CD8-positive, alpha-beta memory T cell (primary cell): ENCODE measurements at regions of chr1 and their contacts with region 1.

Region 1: DNA sequence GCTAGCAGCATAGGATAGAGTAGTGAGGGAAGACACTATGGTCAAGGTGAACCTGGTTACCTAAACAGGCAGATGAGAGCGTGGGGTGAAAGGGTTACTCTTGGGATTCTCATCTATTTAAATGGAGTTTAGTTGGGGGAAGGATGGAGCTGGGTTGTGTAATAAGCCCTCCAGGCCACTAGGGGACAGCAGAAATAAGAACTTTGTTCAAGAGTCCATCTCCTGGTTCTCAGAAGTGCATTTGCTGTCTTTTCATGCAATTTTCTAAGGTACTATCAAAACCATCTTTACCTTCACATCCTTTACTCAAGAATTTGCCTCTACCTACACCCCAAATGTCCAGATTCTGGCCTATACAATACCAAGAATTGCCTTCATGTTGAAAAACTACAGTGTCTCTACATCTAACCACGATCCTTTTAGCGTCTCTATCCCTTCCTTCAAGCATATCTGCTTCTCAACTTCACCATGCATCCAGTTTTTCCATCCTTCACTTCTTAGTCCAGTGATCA is 28.0 kb downstream of the SLAMF1 start:
- DNase-seq: peak in 4 of 5 donors; percentile 21 to 63 (median 44)
- H3K4me3 ChIP-seq: no peak overlapping the region
- H3K4me3 Mint-ChIP-seq: peak overlapping the region in 1 of 7 donors; percentile 1
- H3K27ac ChIP-seq: no peak overlapping the region
- H3K27ac Mint-ChIP-seq: peak overlapping the region; percentile 3 to 91 (median 63)
- H3K4me1 ChIP-seq: peaks cover 37% of the 10 kb centered on the region
- H3K4me1 Mint-ChIP-seq: peaks cover 62 to 86% (median 75%) of the 10 kb centered on the region in 3 donors
- H3K27me3 ChIP-seq: no peaks in the 10 kb centered on the region
- H3K27me3 Mint-ChIP-seq: no peaks in the 10 kb centered on the region

Region 2: GRCh38 chr1:160186246-160186645 is 432.6 kb before region 1 on chr1:
- CTCF ChIA-PET with region 1: no interaction called
- POLR2A ChIA-PET with region 1: no interaction called
- DNase-seq: no peak
- H3K4me3 ChIP-seq: no peak overlapping the region
- H3K4me3 Mint-ChIP-seq: no peak overlapping the region
- H3K27ac ChIP-seq: no peak overlapping the region
- H3K27ac Mint-ChIP-seq: peak overlapping the region in 1 of 8 donors; percentile 19
- H3K4me1 ChIP-seq: no peaks in the 10 kb centered on the region
- H3K4me1 Mint-ChIP-seq: no peaks in the 10 kb centered on the region
- H3K27me3 ChIP-seq: no peaks in the 10 kb centered on the region
- H3K27me3 Mint-ChIP-seq: peaks cover 9 to 26% of the 10 kb centered on the region in 2 donors

Region 3: DNA sequence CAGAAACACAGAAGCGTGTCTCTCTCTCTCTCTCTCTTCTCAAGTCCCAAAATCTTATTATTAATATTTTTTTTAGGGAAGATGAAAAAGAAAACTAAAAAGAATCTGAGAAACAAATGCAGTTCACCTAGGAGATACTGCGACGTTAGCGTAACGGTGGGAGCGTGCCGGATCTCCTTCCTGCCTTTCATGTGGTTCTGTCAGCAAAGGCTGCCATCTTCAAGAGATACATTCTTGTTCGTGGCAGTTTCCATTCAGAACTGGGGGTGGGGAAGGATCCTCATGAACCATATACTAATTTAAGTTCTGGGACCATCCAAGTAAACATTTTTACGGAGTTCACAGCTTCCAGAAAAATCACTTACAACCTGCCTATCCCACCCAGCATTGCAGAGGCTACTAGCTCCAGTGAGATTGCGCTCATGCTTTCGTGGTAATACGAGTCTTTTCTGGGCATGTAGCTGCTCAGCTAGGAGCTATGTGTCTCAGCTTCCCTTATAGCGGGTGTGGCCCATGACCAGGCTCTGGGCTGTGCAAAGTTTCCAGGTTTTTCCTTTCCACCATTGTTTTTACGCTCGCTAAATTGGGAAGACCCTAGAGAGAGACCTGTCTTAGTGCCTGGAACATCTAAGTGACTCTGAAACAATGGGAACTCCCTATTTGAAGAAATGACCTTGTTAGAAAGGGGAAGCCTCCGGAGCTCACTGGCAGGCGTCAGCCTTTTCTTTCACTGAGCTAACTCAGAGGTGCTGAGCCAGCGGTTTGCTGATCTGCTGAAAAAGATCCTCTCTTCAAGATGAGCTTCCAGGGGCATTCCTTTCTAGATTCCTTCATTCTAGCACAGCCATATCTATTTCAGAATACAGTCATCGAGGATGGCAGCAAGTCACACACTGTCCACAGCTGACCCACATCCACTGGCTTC is 10.7 kb after region 1 on chr1:
- CTCF ChIA-PET with region 1: interaction called, 30 read pairs
- POLR2A ChIA-PET with region 1: interaction called, 3 read pairs
- DNase-seq: peak; percentile 50 to 90 (median 85)
- H3K4me3 ChIP-seq: peak overlapping the region; percentile 52
- H3K4me3 Mint-ChIP-seq: peak overlapping the region; percentile 72 to 87 (median 82)
- H3K27ac ChIP-seq: peak overlapping the region; percentile 78
- H3K27ac Mint-ChIP-seq: peak overlapping the region; percentile 83 to 99 (median 98)
- H3K4me1 ChIP-seq: peaks cover 97% of the 10 kb centered on the region
- H3K4me1 Mint-ChIP-seq: peaks cover 99 to 100% (median 100%) of the 10 kb centered on the region in 3 donors
- H3K27me3 ChIP-seq: no peaks in the 10 kb centered on the region
- H3K27me3 Mint-ChIP-seq: no peaks in the 10 kb centered on the region

Region 4: DNA sequence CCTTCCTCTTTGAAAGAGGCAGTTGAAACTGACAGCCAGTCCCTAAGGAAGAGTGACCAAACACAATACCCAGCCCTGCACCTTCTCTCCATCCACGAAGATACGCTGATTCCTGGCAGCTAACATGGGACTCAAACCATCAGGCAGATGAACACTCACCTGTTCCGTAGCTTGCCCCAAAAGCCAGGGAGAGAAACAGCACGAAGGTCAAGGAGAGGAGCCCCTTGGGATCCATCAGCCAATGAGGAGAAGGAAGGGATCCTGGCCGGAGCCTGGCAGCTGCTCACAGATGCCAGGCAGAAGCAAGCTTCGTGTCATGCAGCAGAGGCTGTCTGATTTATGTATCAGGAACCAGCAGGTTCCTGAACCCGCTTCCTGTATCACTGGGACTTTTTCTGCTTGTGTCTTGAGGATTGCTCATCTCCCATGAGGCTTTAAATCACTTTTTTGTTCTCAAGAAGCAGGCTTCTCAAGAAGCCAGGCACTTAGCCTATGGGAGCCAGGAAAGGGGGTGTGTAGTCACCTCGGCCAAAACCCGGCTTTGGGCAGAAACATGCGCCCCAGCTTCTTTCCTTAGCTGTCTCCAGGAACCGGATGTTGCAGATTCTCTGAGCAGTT is 28.0 kb after region 1 on chr1 and contains the start of gene SLAMF1:
- CTCF ChIA-PET with region 1: interaction called, 11 read pairs
- POLR2A ChIA-PET with region 1: interaction called, 3 read pairs
- DNase-seq: peak in 4 of 5 donors; percentile 19 to 58 (median 50)
- H3K4me3 ChIP-seq: peak within 1 kb of the TSS; percentile 86
- H3K4me3 Mint-ChIP-seq: peak within 1 kb of the TSS; percentile 94 to 100 (median 99)
- H3K27ac ChIP-seq: peak within 1 kb of the TSS; percentile 68
- H3K27ac Mint-ChIP-seq: peak within 1 kb of the TSS; percentile 87 to 99 (median 97)
- H3K4me1 ChIP-seq: peaks cover 59% of the 10 kb centered on the region
- H3K4me1 Mint-ChIP-seq: peaks cover 67 to 86% (median 75%) of the 10 kb centered on the region in 3 donors
- H3K27me3 ChIP-seq: no peaks in the 10 kb centered on the region
- H3K27me3 Mint-ChIP-seq: no peaks in the 10 kb centered on the region
- total RNA-seq, gene SLAMF1: 74.0 to 75.0 TPM

Region 5: DNA sequence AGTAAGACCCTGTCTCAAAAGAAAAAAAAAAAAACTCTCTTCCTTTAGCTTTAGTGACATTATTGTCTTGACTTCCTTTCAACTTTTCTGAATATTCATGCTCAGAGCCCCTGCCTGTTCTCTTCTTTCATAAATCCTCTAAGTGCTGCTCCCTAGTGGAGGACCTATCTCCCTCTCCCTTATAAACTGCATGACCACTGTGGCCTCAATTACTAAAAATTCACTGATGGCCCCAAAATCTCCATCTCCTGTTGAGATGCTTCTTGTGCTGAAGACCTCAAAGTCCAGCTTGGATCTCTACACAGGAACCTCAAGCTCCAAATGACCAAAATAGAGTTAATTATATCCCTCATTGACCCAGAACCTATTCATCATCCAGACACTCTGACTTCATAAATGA is 258.4 kb after region 1 on chr1:
- CTCF ChIA-PET with region 1: no interaction called
- POLR2A ChIA-PET with region 1: no interaction called
- DNase-seq: peak in 2 of 5 donors; percentile 42 to 54
- H3K4me3 ChIP-seq: no peak overlapping the region
- H3K4me3 Mint-ChIP-seq: no peak overlapping the region
- H3K27ac ChIP-seq: no peak overlapping the region
- H3K27ac Mint-ChIP-seq: peak overlapping the region in 5 of 8 donors; percentile 2 to 80 (median 27)
- H3K4me1 ChIP-seq: peaks cover 12% of the 10 kb centered on the region
- H3K4me1 Mint-ChIP-seq: peaks cover 23 to 46% (median 23%) of the 10 kb centered on the region in 3 donors
- H3K27me3 ChIP-seq: no peaks in the 10 kb centered on the region
- H3K27me3 Mint-ChIP-seq: no peaks in the 10 kb centered on the region